Panc1 (cell line): ENCODE measurements at regions of chr5 and their contacts with region 1.

Region 1: DNA sequence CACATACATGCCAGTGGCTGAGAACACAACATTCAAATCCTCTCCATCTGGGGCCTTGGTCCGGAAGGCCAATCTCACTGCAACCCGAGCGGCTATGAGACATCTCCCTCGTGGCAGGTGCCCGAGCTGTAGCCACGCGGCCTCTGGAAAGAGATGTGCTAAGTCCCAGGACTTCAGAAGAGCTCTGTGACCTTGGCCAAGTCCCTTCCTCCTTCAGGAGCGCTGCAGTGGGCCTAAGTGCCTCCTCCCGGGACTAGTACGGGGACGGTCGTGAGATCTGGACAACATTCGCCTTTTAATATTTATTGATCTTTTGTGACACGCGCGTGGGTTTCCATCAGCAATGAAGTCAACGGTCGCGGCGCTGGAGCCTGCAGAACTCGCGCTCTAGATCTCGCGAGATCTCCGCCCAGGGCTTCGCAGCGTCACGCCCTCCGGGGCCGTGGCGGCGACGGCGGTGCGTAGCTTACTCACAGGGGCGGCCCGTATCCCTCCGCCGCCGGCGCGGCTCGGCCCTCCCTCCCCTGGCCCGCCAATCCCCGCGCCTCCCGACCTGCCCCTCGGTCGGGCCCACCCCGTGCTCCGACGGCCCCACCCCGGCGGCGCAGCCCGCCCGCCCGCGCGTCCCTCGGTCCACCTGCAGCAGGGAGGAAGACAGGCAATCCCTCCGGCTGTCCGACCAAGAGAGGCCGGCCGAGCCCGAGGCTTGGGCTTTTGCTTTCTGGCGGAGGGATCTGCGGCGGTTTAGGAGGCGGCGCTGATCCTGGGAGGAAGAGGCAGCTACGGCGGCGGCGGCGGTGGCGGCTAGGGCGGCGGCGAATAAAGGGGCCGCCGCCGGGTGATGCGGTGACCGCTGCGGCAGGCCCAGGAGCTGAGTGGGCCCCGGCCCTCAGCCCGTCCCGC is at the start of gene UBE2D2:
- DNase-seq: peak; percentile 86
- ATAC-seq: peak; percentile 98
- H3K4me3 ChIP-seq: peak within 1 kb of the TSS; percentile 90 to 95
- H3K27ac ChIP-seq: peak within 1 kb of the TSS; percentile 99
- H3K4me1 ChIP-seq: peaks cover 23% of the 10 kb centered on the region
- H3K27me3 ChIP-seq: no peaks in the 10 kb centered on the region
- CTCF ChIP-seq: no peak
- total RNA-seq, gene UBE2D2: 222 TPM

Region 2: GRCh38 chr5:139293504-139294373 is 267.3 kb before region 1 on chr5 and contains the start of gene MATR3:
- CTCF ChIA-PET with region 1: no interaction called
- POLR2A ChIA-PET with region 1: interaction called, 13 read pairs
- in situ Hi-C with region 1: no loop called
- intact Hi-C with region 1: no loop called
- DNase-seq: peak; percentile 84
- ATAC-seq: peak; percentile 91
- H3K4me3 ChIP-seq: peak within 1 kb of the TSS; percentile 78 to 90
- H3K27ac ChIP-seq: peak within 1 kb of the TSS; percentile 94
- H3K4me1 ChIP-seq: peaks cover 31% of the 10 kb centered on the region
- H3K27me3 ChIP-seq: no peaks in the 10 kb centered on the region
- CTCF ChIP-seq: no peak
- total RNA-seq, gene MATR3: 194 TPM

Region 3: GRCh38 chr5:139443831-139444453 is 117.1 kb before region 1 on chr5:
- CTCF ChIA-PET with region 1: no interaction called
- POLR2A ChIA-PET with region 1: no interaction called
- in situ Hi-C with region 1: no loop called
- intact Hi-C with region 1: no loop called
- DNase-seq: no peak
- ATAC-seq: no peak
- H3K4me3 ChIP-seq: no peak overlapping the region
- H3K27ac ChIP-seq: no peak overlapping the region
- H3K4me1 ChIP-seq: no peaks in the 10 kb centered on the region
- H3K27me3 ChIP-seq: no peaks in the 10 kb centered on the region; the same call in 1 of the 2 replicates
- CTCF ChIP-seq: no peak

Region 4: GRCh38 chr5:139512786-139513390 is 48.1 kb before region 1 on chr5:
- CTCF ChIA-PET with region 1: interaction called, 10 read pairs
- POLR2A ChIA-PET with region 1: no interaction called
- in situ Hi-C with region 1: no loop called
- intact Hi-C with region 1: no loop called
- DNase-seq: no peak
- ATAC-seq: no peak
- H3K4me3 ChIP-seq: no peak overlapping the region
- H3K27ac ChIP-seq: no peak overlapping the region
- H3K4me1 ChIP-seq: peaks cover 4% of the 10 kb centered on the region; the same call in 1 of the 2 replicates
- H3K27me3 ChIP-seq: no peaks in the 10 kb centered on the region
- CTCF ChIP-seq: no peak

Region 5: DNA sequence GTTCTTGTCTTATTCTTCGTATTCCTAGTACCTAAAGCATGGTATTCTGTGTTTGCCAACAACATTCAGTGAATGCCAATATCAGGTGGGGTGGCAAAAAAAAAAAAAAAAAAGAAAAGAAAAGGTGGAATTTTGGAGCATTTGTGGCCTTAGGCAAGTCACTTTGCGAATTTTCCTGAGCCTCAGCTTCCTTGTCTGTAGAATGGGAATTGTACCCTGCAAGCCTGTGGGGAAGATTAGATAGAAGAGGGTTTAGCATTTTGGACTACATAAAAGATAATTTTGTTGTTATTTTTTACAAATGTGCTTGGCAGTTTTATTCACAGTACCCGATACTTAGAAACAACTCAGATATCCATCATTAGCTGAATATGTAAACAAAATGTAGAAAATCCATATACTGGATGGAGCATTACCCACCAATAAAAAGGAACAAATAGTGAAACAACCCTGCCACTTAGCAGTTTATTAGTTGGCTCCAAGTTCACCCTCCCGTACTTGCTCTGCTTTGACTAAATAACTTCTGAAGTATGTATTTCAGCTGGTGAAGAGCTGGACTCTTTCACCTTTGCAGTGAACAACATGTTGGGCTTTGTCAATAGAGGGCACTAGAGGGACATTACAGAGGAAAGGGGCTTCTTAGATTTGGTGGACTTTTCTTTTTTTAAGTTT is 13.8 kb after region 1 on chr5:
- CTCF ChIA-PET with region 1: interaction called, 17 read pairs
- POLR2A ChIA-PET with region 1: no interaction called
- in situ Hi-C with region 1: no loop called
- intact Hi-C with region 1: no loop called
- DNase-seq: no peak
- ATAC-seq: peak; percentile 71
- H3K4me3 ChIP-seq: no peak overlapping the region
- H3K27ac ChIP-seq: no peak overlapping the region
- H3K4me1 ChIP-seq: peaks cover 4% of the 10 kb centered on the region; the same call in 1 of the 2 replicates
- H3K27me3 ChIP-seq: no peaks in the 10 kb centered on the region
- CTCF ChIP-seq: no peak; the same call in 1 of the 2 replicates

Region 6: DNA sequence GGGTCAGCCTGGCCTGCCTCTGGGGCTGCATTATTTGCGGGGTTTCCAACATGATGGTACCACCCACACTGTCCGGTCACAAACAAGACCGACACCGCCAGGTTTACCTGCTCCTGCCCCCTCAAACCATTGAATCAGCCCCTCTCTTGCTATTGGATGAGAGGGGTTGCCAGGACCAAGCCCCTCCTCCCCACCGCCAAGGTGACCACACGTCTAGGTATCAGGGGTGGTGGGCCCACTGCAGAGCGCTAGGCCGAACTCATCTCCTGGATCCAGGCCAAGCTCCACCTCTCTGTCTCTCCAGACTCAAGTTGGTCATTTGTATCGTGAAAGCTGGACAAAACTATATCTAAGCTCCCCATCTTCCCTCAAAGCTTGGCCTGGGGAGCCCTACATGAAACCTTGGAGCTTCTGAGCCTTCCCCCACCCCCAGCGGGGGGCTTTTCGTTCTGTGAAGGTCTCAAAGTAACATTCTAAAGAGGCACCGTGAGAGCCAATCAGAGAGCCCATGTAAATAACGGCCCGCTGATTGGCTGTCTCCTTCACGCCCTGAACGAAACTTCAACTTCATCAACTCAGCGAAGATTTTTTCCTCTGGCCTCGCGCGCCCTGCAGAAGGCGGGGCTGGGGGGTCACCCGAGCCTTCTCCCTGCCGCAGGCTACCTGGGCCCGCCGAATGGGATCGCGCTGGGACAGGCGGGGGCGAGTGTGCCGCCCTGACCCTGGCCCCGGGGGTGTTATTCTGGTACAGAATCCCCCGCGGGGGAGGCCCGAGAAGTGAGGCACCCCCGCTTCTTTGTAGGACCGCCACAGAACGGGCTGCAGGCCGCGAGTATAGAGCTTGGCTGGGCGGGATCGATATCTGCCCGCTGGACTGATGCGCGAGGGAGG is 185.0 kb after region 1 on chr5:
- CTCF ChIA-PET with region 1: no interaction called
- POLR2A ChIA-PET with region 1: no interaction called
- in situ Hi-C with region 1: no loop called
- intact Hi-C with region 1: no loop called
- DNase-seq: no peak
- ATAC-seq: peak; percentile 79
- H3K4me3 ChIP-seq: peak overlapping the region; percentile 39 to 60
- H3K27ac ChIP-seq: no peak overlapping the region
- H3K4me1 ChIP-seq: peaks cover 21% of the 10 kb centered on the region
- H3K27me3 ChIP-seq: no peaks in the 10 kb centered on the region
- CTCF ChIP-seq: no peak

Region 7: GRCh38 chr5:139844472-139845145 is 283.6 kb after region 1 on chr5:
- CTCF ChIA-PET with region 1: no interaction called
- POLR2A ChIA-PET with region 1: no interaction called
- in situ Hi-C with region 1: no loop called
- intact Hi-C with region 1: no loop called
- DNase-seq: peak; percentile 39
- ATAC-seq: peak; percentile 89
- H3K4me3 ChIP-seq: no peak overlapping the region
- H3K27ac ChIP-seq: no peak overlapping the region
- H3K4me1 ChIP-seq: no peaks in the 10 kb centered on the region
- H3K27me3 ChIP-seq: no peaks in the 10 kb centered on the region
- CTCF ChIP-seq: peak; percentile 94